ENCODE measurements at regions of chr3 and their contacts with region 1.

Region 1: GRCh38 chr3:43489930-43490329 is 131.9 kb downstream of the ANO10 start:
- DNase-seq: no peak
- ATAC-seq: no peak
- H3K4me3 Mint-ChIP-seq: no peak overlapping the region
- H3K27ac Mint-ChIP-seq: no peak overlapping the region
- H3K4me1 Mint-ChIP-seq: peaks cover 18% of the 10 kb centered on the region
- H3K27me3 Mint-ChIP-seq: peaks cover 4% of the 10 kb centered on the region

Region 2: DNA sequence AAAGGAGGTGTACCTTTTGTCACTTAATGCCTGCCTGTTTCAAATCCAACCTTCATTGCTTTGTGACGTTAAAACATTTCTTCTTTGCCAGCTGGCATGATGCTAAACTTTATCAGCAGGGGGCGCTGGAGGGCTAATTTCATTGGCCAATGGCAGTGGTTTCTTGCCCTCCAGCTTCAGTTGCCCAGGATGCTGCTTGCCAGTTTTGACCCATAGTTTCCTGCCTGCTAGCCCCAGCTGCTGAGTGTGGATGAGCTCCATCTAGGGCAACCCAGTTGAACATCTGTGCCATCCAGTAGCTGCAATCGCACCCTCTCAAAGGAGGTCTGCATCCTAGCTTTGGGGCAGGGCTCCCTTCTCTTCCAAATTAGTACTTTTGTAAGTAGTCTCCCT is 658.6 kb before region 1 on chr3:
- CTCF ChIA-PET with region 1: no interaction called
- POLR2A ChIA-PET with region 1: no interaction called
- intact Hi-C with region 1: no loop called
- DNase-seq: peak; percentile 90
- ATAC-seq: peak; percentile 92
- H3K4me3 Mint-ChIP-seq: no peak overlapping the region
- H3K27ac Mint-ChIP-seq: no peak overlapping the region
- H3K4me1 Mint-ChIP-seq: peaks cover 5% of the 10 kb centered on the region
- H3K27me3 Mint-ChIP-seq: peaks cover 2% of the 10 kb centered on the region

Region 3: GRCh38 chr3:43180027-43180426 is 309.9 kb before region 1 on chr3:
- CTCF ChIA-PET with region 1: no interaction called
- POLR2A ChIA-PET with region 1: no interaction called
- intact Hi-C with region 1: loop called in 1 of 2 experiments (anchors 5 kb)
- DNase-seq: peak; percentile 52
- ATAC-seq: peak; percentile 76
- H3K4me3 Mint-ChIP-seq: peak overlapping the region; percentile 17
- H3K27ac Mint-ChIP-seq: peak overlapping the region; percentile 66
- H3K4me1 Mint-ChIP-seq: peaks cover 53% of the 10 kb centered on the region
- H3K27me3 Mint-ChIP-seq: no peaks in the 10 kb centered on the region

Measured in activated CD4-positive, alpha-beta T cell treated with anti-CD3 and anti-CD28 coated beads for 36 hours (primary cell).